GM12878 (cell line): ENCODE measurements at regions of chr3 and their contacts with region 1.

Region 1: GRCh38 chr3:15815696-15816095 is 17.9 kb upstream of the ANKRD28 start:
- DNase-seq: no peak
- ATAC-seq: peak; percentile 55
- H3K4me3 ChIP-seq: no peak overlapping the region
- H3K27ac ChIP-seq: no peak overlapping the region
- H3K4me1 ChIP-seq: peaks cover 39% of the 10 kb centered on the region
- H3K27me3 ChIP-seq: no peaks in the 10 kb centered on the region
- CTCF ChIP-seq: peak in 1 of 3 experiments; percentile 29; a peak in 2 of 6 replicates
- EP300 ChIP-seq: no peak
- POLR2A ChIP-seq: no peak
- RAD21 ChIP-seq: peak; percentile 64

Region 2: GRCh38 chr3:15527031-15527459 is 288.7 kb before region 1 on chr3:
- CTCF ChIA-PET with region 1: interaction called, 6 read pairs
- POLR2A ChIA-PET with region 1: no interaction called
- RAD21 ChIA-PET with region 1: interaction called, 11 read pairs
- SMC1A ChIA-PET with region 1: no interaction called
- in situ Hi-C with region 1: no loop called
- intact Hi-C with region 1: no loop called
- DNase-seq: no peak
- ATAC-seq: peak; percentile 98
- H3K4me3 ChIP-seq: no peak overlapping the region
- H3K27ac ChIP-seq: no peak overlapping the region
- H3K4me1 ChIP-seq: no peaks in the 10 kb centered on the region
- H3K27me3 ChIP-seq: no peaks in the 10 kb centered on the region
- CTCF ChIP-seq: peak; percentile 44 to 66 (median 59)
- EP300 ChIP-seq: no peak
- POLR2A ChIP-seq: no peak
- RAD21 ChIP-seq: peak; percentile 66

Region 3: GRCh38 chr3:15629860-15630597 is 185.7 kb before region 1 on chr3:
- CTCF ChIA-PET with region 1: interaction called, 288 read pairs
- POLR2A ChIA-PET with region 1: interaction called, 12 read pairs
- RAD21 ChIA-PET with region 1: interaction called, 248 read pairs
- SMC1A ChIA-PET with region 1: interaction called, 362 read pairs
- in situ Hi-C with region 1: no loop called
- intact Hi-C with region 1: loop called (anchors 1 kb)
- DNase-seq: peak; percentile 83
- ATAC-seq: peak; percentile 98
- H3K4me3 ChIP-seq: peak overlapping the region; percentile 65; the same call in 1 of the 2 replicates
- H3K27ac ChIP-seq: peak overlapping the region; percentile 51
- H3K4me1 ChIP-seq: peaks cover 12% of the 10 kb centered on the region
- H3K27me3 ChIP-seq: no peaks in the 10 kb centered on the region
- CTCF ChIP-seq: peak; percentile 66 to 88 (median 82)
- EP300 ChIP-seq: no peak
- POLR2A ChIP-seq: no peak
- RAD21 ChIP-seq: peak; percentile 91

Region 4: DNA sequence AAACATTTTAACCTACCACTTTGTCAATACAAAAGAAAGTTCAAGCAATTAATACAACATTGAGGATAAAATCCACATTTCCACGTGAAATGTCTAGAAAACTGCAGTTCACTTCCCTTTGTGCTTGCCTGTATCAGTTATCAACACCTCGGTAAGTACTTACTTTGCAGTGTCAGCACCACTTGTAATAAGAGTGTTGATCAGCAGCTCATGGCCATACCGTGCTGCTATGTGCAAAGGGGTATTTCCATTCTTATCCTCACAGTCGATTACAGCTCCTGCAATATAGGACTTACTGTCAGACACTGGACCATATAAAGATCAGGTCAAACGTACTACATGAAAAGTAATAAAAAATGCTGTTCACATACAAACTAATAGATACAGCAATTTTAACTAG is 102.3 kb before region 1 on chr3:
- CTCF ChIA-PET with region 1: interaction called, 24 read pairs
- POLR2A ChIA-PET with region 1: no interaction called
- RAD21 ChIA-PET with region 1: interaction called, 23 read pairs
- SMC1A ChIA-PET with region 1: interaction called, 46 read pairs
- in situ Hi-C with region 1: no loop called
- intact Hi-C with region 1: loop called (anchors 5 kb)
- DNase-seq: no peak
- ATAC-seq: peak; percentile 81
- H3K4me3 ChIP-seq: no peak overlapping the region
- H3K27ac ChIP-seq: no peak overlapping the region
- H3K4me1 ChIP-seq: no peaks in the 10 kb centered on the region; the same call in 1 of the 2 replicates
- H3K27me3 ChIP-seq: no peaks in the 10 kb centered on the region
- CTCF ChIP-seq: no peak
- EP300 ChIP-seq: no peak
- POLR2A ChIP-seq: no peak
- RAD21 ChIP-seq: no peak

Region 5: DNA sequence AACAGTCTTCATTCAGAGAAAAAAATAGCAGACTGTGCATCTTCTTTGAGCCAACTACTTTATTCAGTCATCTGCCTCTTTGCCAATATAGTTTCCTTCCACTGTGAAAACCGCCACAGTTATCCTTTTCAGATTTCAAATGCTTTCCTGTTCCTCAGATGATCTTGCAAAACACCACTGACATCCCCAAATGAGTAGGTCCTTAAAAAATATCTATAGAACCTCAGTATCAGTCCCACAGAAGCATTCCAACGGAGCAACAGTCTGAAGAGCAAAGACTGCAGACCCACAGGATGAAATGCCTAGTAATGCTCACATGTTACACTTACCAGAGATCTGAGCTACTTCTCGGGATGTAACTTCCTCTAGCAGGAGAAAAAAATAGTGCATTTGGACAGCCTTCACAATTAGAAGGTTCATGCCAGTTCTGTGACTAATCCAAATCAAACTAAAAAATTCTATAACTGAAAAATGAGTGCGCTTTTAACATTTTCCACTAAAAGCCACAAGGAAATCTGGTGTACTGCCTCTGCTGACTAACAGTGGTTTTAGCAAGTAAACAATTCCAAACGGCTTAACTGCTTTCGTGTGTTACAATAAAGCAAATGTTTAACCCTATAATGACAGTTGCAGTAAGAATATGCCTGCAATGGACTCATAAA is 17.9 kb before region 1 on chr3 and contains the start of gene ANKRD28:
- CTCF ChIA-PET with region 1: interaction called, 15 read pairs
- POLR2A ChIA-PET with region 1: interaction called, 4 read pairs
- RAD21 ChIA-PET with region 1: interaction called, 164 read pairs
- SMC1A ChIA-PET with region 1: interaction called, 193 read pairs
- in situ Hi-C with region 1: no loop called
- intact Hi-C with region 1: no loop called
- DNase-seq: no peak
- ATAC-seq: peak; percentile 32
- H3K4me3 ChIP-seq: peak within 1 kb of the TSS; percentile 73
- H3K27ac ChIP-seq: peak within 1 kb of the TSS; percentile 94
- H3K4me1 ChIP-seq: peaks cover 27% of the 10 kb centered on the region; the same call in 1 of the 2 replicates
- H3K27me3 ChIP-seq: no peaks in the 10 kb centered on the region
- CTCF ChIP-seq: peak; percentile 7 to 25 (median 14); a peak in 1 of 6 replicates
- EP300 ChIP-seq: peak in 1 of 2 experiments; percentile 64; a peak in 1 of 4 replicates
- POLR2A ChIP-seq: 0 out of 2 replicates have a peak, but pooled peaks have one; percentile 32
- RAD21 ChIP-seq: no peak
- polyA plus RNA-seq, gene ANKRD28: 12.3 to 13.7 TPM

Region 6: GRCh38 chr3:15892311-15893227 is 76.9 kb after region 1 on chr3:
- CTCF ChIA-PET with region 1: no interaction called
- POLR2A ChIA-PET with region 1: no interaction called
- RAD21 ChIA-PET with region 1: no interaction called
- SMC1A ChIA-PET with region 1: no interaction called
- in situ Hi-C with region 1: no loop called
- intact Hi-C with region 1: no loop called
- DNase-seq: no peak
- ATAC-seq: no peak
- H3K4me3 ChIP-seq: no peak overlapping the region
- H3K27ac ChIP-seq: no peak overlapping the region
- H3K4me1 ChIP-seq: no peaks in the 10 kb centered on the region
- H3K27me3 ChIP-seq: no peaks in the 10 kb centered on the region
- CTCF ChIP-seq: no peak
- EP300 ChIP-seq: no peak
- POLR2A ChIP-seq: no peak
- RAD21 ChIP-seq: no peak

Region 7: GRCh38 chr3:15964605-15965442 is 149.1 kb after region 1 on chr3:
- CTCF ChIA-PET with region 1: no interaction called
- POLR2A ChIA-PET with region 1: no interaction called
- RAD21 ChIA-PET with region 1: no interaction called
- SMC1A ChIA-PET with region 1: interaction called, 5 read pairs
- in situ Hi-C with region 1: no loop called
- intact Hi-C with region 1: loop called (anchors 5 kb)
- DNase-seq: no peak
- ATAC-seq: no peak
- H3K4me3 ChIP-seq: no peak overlapping the region
- H3K27ac ChIP-seq: no peak overlapping the region
- H3K4me1 ChIP-seq: no peaks in the 10 kb centered on the region
- H3K27me3 ChIP-seq: no peaks in the 10 kb centered on the region
- CTCF ChIP-seq: no peak
- EP300 ChIP-seq: no peak
- POLR2A ChIP-seq: no peak
- RAD21 ChIP-seq: no peak

Region 8: GRCh38 chr3:16247276-16248061 is 431.8 kb after region 1 on chr3:
- CTCF ChIA-PET with region 1: interaction called, 12 read pairs
- POLR2A ChIA-PET with region 1: no interaction called
- RAD21 ChIA-PET with region 1: interaction called, 10 read pairs
- SMC1A ChIA-PET with region 1: interaction called, 5 read pairs
- in situ Hi-C with region 1: loop called (anchors 5 kb)
- intact Hi-C with region 1: loop called (anchors 1 kb)
- DNase-seq: peak; percentile 43
- ATAC-seq: peak; percentile 94
- H3K4me3 ChIP-seq: no peak overlapping the region
- H3K27ac ChIP-seq: no peak overlapping the region
- H3K4me1 ChIP-seq: peaks cover 7% of the 10 kb centered on the region
- H3K27me3 ChIP-seq: no peaks in the 10 kb centered on the region
- CTCF ChIP-seq: peak; percentile 84 to 97 (median 90)
- EP300 ChIP-seq: peak; percentile 29 to 50; a peak in 1 of 4 replicates
- POLR2A ChIP-seq: no peak
- RAD21 ChIP-seq: peak; percentile 94